Left ventricle myocardium inferior (tissue), 1 donor: ENCODE measurements at regions of chr6 and their contacts with region 1.

Region 1: DNA sequence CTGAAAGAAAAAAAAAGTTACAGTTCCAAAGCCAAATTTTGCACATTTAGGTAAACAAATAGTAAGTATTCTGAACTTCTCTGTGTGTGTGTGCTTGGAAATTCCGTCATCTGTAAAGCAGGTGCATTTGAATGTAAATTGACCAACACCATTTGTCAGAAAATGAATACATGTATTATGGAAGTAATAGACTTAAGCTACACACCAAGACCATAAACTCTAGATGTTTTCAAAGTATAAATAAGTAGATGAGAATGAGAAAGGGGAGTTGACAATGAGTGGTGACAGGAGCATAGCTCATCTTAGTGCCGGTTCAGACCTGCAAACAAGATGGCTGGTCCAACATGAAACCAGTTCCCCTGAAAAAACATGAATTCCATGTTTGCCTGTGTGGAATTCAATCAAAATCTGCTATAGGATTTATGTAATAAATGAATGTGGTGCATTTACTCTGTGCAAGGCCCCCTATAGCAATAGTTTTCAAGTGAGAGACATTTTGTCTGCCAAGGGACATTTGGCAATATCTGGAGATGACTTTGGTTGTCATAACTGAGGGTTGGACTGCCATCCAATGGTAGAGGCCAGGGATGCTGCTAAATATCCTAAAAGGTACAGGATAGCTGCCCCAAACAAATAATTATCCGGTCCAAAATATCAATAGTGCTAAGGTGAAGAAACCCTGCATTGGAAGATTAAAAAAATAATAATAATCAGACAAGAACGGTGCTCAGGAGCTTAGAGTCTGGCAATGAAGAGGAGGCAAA is 11.0 kb upstream of the FILIP1 start:
- DNase-seq: no peak
- H3K4me3 ChIP-seq: no peak overlapping the region
- H3K27ac ChIP-seq: peak overlapping the region; percentile 2
- H3K4me1 ChIP-seq: peaks cover 14% of the 10 kb centered on the region
- H3K27me3 ChIP-seq: no peaks in the 10 kb centered on the region
- CTCF ChIP-seq: peak; percentile 69

Region 2: DNA sequence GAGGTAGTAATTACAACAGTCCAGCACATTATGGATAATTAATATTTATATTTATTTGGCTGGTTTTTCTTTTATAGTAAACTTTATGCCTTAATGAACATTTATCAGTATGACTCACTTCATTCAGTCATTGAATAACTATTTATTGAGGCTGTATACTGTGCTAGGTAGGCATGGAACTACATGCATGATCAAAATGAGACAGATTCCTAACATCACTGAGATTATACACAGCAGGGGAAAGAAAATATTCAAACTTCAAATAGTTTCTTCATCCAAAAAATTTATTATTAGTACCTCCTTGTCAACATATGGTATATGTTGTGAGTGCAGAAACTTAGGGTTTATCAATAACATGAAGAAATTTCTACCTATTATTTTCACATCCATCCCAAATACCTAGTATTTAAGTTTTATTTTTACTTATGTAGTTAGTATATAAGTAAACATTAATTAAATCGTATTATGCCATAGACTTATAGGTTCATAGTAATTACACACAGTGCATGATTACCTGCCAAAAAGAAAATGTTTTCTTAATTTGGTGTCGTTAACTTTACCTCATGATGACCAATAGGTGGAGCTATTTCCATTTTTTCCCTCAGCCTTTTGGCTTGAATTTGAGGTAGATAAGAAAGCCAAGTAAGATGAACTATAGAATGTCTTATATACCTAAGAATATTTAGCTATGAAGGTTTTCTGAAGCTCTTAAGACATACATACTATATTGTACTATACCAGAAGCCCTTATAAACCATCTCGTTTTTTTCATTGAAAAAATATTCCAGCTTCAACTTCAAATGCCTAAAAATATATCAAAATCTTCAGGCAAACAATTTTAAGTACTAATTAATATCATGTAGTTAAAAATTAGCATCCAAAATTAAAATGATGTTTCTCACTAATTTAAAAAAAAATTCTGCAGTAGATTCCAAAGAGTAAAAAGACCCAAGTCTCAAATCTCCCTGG is 207.6 kb before region 1 on chr6:
- intact Hi-C with region 1: loop called (anchors 5 kb)
- DNase-seq: no peak
- H3K4me3 ChIP-seq: no peak overlapping the region
- H3K27ac ChIP-seq: no peak overlapping the region
- H3K4me1 ChIP-seq: peaks cover 35% of the 10 kb centered on the region
- H3K27me3 ChIP-seq: no peaks in the 10 kb centered on the region
- CTCF ChIP-seq: peak; percentile 75